ENCODE measurements at regions of chr14 and their contacts with region 1.

Region 1: GRCh38 chr14:91286530-91286937 is 42.0 kb upstream of the GPR68 start:
- DNase-seq: peak in 3 of 4 donors; percentile 63 to 71 (median 65)
- ATAC-seq: peak; percentile 90
- H3K4me3 ChIP-seq: no peak overlapping the region
- H3K27ac ChIP-seq: no peak overlapping the region
- H3K4me1 ChIP-seq: peaks cover 3 to 9% of the 10 kb centered on the region in 2 donors
- H3K27me3 ChIP-seq: no peaks in the 10 kb centered on the region
- CTCF ChIP-seq: peak; percentile 86 to 88

Region 2: GRCh38 chr14:90903101-90903500 is 383.4 kb before region 1 on chr14:
- intact Hi-C with region 1: loop called in 1 of 2 experiments (anchors 10 kb)
- DNase-seq: peak in 2 of 4 donors; percentile 38 to 70
- ATAC-seq: peak; percentile 97
- H3K4me3 ChIP-seq: no peak overlapping the region
- H3K27ac ChIP-seq: no peak overlapping the region
- H3K4me1 ChIP-seq: no peaks in the 10 kb centered on the region
- H3K27me3 ChIP-seq: no peaks in the 10 kb centered on the region
- CTCF ChIP-seq: peak; percentile 69 to 72

Region 3: DNA sequence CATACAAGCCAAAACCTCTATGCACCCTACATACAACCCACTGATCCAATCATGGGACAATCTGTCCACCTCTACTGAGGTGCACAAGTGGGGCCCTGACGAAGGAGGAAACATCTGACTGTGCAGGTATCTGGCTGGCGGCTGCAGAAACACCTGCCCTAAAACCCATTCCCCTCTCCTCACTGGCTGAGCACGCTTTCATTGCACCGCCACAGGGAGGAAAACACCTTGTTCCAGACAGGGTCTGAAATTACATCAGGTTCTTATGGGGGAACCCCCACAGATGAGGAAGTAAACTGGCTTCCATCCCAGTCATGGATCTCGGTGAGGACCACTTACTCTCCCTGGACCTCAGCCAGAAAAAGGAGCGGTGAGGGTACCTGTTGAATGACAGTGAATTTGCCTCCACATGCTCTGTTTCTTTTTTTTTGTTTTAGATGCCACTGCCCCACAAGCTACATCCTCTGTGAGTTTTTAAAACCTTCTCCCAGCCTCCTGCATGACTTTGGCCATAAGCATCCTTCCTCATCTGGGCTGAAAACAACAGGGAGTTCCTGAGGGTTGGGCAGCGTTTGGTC is 196.5 kb before region 1 on chr14:
- intact Hi-C with region 1: no loop called
- DNase-seq: no peak
- ATAC-seq: no peak
- H3K4me3 ChIP-seq: no peak overlapping the region
- H3K27ac ChIP-seq: no peak overlapping the region
- H3K4me1 ChIP-seq: no peaks in the 10 kb centered on the region
- H3K27me3 ChIP-seq: no peaks in the 10 kb centered on the region
- CTCF ChIP-seq: no peak

Region 4: GRCh38 chr14:91164685-91165084 is 121.8 kb before region 1 on chr14:
- intact Hi-C with region 1: loop called in 1 of 2 experiments (anchors 10 kb)
- DNase-seq: peak in 1 of 4 donors; percentile 80
- ATAC-seq: peak; percentile 96
- H3K4me3 ChIP-seq: no peak overlapping the region
- H3K27ac ChIP-seq: peak overlapping the region; percentile 7 to 38
- H3K4me1 ChIP-seq: peaks cover 0 to under 1% of the 10 kb centered on the region in 2 donors
- H3K27me3 ChIP-seq: no peaks in the 10 kb centered on the region
- CTCF ChIP-seq: no peak

Region 5: GRCh38 chr14:91177073-91178034 is 109.2 kb before region 1 on chr14:
- intact Hi-C with region 1: loop called in 1 of 2 experiments (anchors 5 kb)
- DNase-seq: peak in 2 of 4 donors; percentile 56 to 61
- ATAC-seq: peak; percentile 91
- H3K4me3 ChIP-seq: no peak overlapping the region
- H3K27ac ChIP-seq: peak overlapping the region in 1 of 2 donors; percentile 41
- H3K4me1 ChIP-seq: peaks cover 4 to 10% of the 10 kb centered on the region in 2 donors
- H3K27me3 ChIP-seq: no peaks in the 10 kb centered on the region
- CTCF ChIP-seq: peak; percentile 72 to 74

Region 6: DNA sequence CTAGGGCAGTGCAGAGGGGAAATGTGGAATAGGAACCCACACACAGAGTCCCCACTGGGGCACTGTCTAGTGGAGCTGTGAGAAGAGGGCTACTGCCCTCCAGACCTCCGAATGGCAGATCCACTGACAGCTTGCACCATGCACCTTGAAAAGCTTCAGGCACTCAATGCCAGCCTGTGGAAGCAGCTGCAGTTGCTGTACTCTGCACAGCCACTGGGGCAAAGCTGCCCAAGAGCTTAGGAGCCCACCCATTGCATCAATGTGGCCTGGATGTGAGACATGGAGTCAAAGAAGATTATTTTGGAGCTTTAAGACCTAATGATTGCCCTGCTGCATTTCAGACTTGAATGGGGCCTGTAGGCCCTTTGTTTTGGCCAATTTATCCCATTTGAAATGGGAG is 152.8 kb after region 1 on chr14:
- intact Hi-C with region 1: no loop called
- DNase-seq: no peak
- ATAC-seq: no peak
- H3K4me3 ChIP-seq: no peak overlapping the region
- H3K27ac ChIP-seq: no peak overlapping the region
- H3K4me1 ChIP-seq: no peaks in the 10 kb centered on the region
- H3K27me3 ChIP-seq: no peaks in the 10 kb centered on the region
- CTCF ChIP-seq: no peak